Uterus (tissue), 4 donors: ENCODE measurements at regions of chr7 and their contacts with region 1.

Region 1: GRCh38 chr7:73726083-73726466 is 6.6 kb upstream of the STX1A start:
- DNase-seq: no peak
- H3K4me3 ChIP-seq: no peak overlapping the region
- H3K27ac ChIP-seq: no peak overlapping the region
- H3K4me1 ChIP-seq: no peaks in the 10 kb centered on the region
- H3K27me3 ChIP-seq: no peaks in the 10 kb centered on the region
- CTCF ChIP-seq: no peak
- POLR2A ChIP-seq: no peak

Region 2: DNA sequence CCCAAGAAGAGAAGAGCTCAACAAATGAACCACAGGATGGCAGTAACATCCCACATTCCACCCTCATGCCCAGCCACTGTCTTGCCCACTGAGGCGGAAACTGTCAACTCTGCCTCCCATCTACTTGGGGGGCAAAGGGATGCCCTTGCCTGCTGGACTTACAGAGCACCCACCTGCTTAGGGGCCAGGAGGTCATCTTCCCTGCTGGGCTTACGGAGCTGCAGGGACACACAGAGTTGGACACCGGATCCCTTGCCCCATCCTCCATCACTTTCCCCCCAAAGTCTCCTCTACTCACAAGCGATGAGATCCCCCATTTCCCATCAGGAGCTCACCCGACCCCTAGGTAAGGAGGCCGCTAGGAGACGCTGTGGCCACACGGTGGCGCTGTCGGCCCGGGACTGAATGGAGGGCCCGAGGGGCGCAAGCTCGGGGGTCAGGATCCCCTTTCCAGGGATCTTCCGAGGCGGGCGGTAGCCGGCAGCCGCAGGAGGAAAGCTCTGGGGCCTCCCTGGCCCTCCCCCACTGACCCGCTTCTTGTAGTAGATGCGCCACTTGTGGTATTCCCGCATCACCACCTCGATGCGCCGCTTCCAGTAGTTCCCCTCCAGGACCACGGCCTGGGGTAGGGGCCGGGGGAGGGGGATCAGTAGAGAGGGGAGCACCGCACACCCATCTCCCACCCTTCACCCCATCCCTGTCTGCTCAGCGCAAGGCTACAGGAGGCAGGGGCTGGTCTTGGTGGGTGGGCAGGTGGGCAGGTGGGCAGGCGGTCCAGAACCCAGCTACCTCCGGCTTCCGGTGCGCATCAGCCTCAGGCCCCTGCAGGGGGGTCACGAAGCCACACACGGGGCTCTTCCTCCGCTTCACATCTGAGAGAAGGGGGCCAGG is 119.0 kb before region 1 on chr7:
- intact Hi-C with region 1: loop called (anchors 2 kb)
- DNase-seq: peak; percentile 35 to 46
- H3K4me3 ChIP-seq: no peak overlapping the region
- H3K27ac ChIP-seq: no peak overlapping the region
- H3K4me1 ChIP-seq: no peaks in the 10 kb centered on the region
- H3K27me3 ChIP-seq: peaks cover 0 to 4% of the 10 kb centered on the region in 2 donors
- CTCF ChIP-seq: peak; percentile 86 to 94 (median 92)
- POLR2A ChIP-seq: no peak